Naive thymus-derived CD4-positive, alpha-beta T cell (primary cell): ENCODE measurements at regions of chr19 and their contacts with region 1.

Region 1: DNA sequence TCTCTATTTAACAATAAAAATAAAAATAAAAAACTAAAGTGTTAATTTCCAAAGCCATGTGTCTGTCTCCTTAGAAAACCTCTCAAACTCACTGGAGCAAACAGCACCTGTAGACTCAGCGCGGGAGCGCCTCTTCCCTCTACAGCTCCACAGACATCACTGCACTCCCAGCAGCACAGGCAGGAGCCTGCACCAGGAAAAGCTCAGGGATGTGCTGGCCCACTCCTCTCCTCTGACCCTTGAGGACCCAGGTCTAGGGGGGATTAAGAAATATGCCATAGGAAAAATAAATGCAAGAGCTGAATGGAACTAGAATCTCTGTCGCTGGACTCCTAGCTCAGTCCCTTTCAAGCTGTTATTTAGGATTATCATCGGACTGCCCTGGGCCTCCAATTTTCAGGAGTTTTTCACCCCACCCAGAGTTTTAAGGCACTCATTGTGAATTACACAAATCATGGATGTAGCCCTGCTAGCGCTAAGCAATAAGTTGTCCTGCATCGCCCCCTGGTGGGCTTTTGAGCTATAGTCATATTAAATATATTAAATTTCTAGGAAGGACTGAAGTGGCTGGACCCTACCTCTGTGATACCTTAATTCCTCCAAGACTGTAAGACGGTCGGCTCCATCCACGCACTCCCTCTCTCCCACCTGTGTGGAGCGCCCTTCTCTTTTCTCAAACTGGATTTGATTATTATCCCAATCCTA is 333.9 kb downstream of the UQCRFS1 start:
- DNase-seq: peak in 8 of 9 donors; percentile 13 to 65 (median 28)
- ATAC-seq: peak; percentile 46
- H3K4me3 ChIP-seq: no peak overlapping the region
- H3K4me3 Mint-ChIP-seq: no peak overlapping the region
- H3K27ac ChIP-seq: no peak overlapping the region
- H3K27ac Mint-ChIP-seq: no peak overlapping the region
- H3K4me1 ChIP-seq: no peaks in the 10 kb centered on the region
- H3K4me1 Mint-ChIP-seq: no peaks in the 10 kb centered on the region
- H3K27me3 ChIP-seq: no peaks in the 10 kb centered on the region
- H3K27me3 Mint-ChIP-seq: peaks cover 0 to 22% (median 7%) of the 10 kb centered on the region in 5 donors

Region 2: GRCh38 chr19:27966390-27966816 is 912.6 kb before region 1 on chr19:
- CTCF ChIA-PET with region 1: no interaction called
- POLR2A ChIA-PET with region 1: no interaction called
- intact Hi-C with region 1: loop called in 1 of 2 experiments (anchors 10 kb)
- DNase-seq: peak in 1 of 9 donors; percentile 1
- ATAC-seq: no peak
- H3K4me3 ChIP-seq: no peak overlapping the region
- H3K4me3 Mint-ChIP-seq: no peak overlapping the region
- H3K27ac ChIP-seq: no peak overlapping the region
- H3K27ac Mint-ChIP-seq: no peak overlapping the region
- H3K4me1 ChIP-seq: no peaks in the 10 kb centered on the region
- H3K4me1 Mint-ChIP-seq: no peaks in the 10 kb centered on the region
- H3K27me3 ChIP-seq: no peaks in the 10 kb centered on the region
- H3K27me3 Mint-ChIP-seq: peaks cover 0 to 14% (median 2%) of the 10 kb centered on the region in 5 donors

Region 3: GRCh38 chr19:28836421-28836820 is 42.6 kb before region 1 on chr19:
- CTCF ChIA-PET with region 1: no interaction called
- POLR2A ChIA-PET with region 1: no interaction called
- intact Hi-C with region 1: no loop called
- DNase-seq: no peak
- ATAC-seq: no peak
- H3K4me3 ChIP-seq: no peak overlapping the region
- H3K4me3 Mint-ChIP-seq: no peak overlapping the region
- H3K27ac ChIP-seq: no peak overlapping the region
- H3K27ac Mint-ChIP-seq: no peak overlapping the region
- H3K4me1 ChIP-seq: no peaks in the 10 kb centered on the region
- H3K4me1 Mint-ChIP-seq: no peaks in the 10 kb centered on the region
- H3K27me3 ChIP-seq: no peaks in the 10 kb centered on the region
- H3K27me3 Mint-ChIP-seq: peaks cover 0 to 13% (median 4%) of the 10 kb centered on the region in 5 donors